Activated CD4-positive, alpha-beta memory T cell treated with anti-CD3 and anti-CD28 coated beads for 36 hours (primary cell): ENCODE measurements at regions of chr6 and their contacts with region 1.

Region 1: DNA sequence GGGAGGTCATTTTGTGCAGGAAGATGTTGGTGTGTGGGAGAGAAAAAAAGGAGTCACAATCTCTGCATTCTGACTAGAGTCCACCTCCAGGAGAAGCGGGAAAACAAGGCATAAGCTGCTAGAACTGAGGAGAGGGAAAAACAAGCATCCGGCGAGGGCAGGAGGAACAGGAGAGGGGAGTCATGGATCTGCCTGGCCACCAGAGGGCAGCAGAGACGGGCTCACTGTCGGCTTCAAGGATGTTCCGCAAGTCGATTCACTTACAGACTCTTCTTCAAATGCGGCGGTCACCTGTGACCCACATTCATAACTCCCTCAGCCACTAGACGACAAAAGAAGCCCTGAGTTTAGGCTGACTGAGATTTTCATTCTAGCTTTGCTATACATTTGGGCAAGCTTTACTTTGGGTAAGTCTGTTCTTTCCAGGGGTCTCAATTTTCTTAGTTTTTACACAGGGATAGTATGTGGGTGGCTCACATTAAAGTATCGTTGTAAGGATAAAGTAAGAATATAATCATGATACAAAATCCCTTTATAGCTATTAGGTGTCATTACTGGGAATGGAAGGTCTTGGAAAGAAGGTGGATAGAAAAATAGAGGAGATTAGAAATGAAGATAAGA is 6.6 kb upstream of the BTNL2 start:
- DNase-seq: peak; percentile 91
- H3K4me3 Mint-ChIP-seq: no peak overlapping the region
- H3K27ac Mint-ChIP-seq: no peak overlapping the region
- H3K4me1 Mint-ChIP-seq: peaks cover 10% of the 10 kb centered on the region
- H3K27me3 Mint-ChIP-seq: peaks cover 42% of the 10 kb centered on the region

Region 2: DNA sequence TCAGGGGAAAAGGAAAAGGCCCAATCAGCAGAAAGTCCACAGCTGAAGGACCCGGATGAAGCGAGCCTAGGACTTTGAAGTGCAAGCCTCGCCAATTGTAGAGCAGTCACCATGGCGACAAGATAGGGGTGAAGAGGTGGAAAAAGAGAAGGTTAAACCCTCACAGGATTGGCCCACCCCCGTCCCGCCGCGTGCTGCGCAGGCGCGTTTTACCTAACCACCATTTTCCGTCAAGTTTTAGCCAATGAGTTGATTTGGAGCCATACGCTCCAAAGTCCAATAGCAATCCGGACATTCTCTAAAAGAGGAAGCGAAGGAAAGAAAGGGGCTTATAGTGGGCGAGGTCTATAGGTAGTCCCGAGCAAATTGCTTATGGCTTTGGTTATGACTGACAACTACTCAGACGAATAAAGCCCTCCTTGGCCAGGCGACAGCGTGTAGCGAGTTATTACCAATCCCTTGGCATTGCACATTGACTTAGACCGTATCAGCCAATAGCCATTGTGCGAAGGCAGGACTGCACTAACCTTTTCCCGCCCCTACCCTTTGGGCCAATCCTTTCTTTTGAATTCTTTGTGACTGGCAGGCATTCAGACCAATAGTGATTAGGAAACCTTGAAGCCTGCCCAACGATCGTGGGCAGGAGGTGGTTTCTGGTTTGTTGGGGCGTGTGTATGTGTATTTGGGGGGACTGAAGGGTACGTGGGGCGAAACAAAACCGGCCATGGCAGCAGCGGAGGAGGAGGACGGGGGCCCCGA is 235.6 kb before region 1 on chr6 and contains the start of gene RNF5:
- CTCF ChIA-PET with region 1: no interaction called
- POLR2A ChIA-PET with region 1: no interaction called
- intact Hi-C with region 1: no loop called
- DNase-seq: peak; percentile 96
- H3K4me3 Mint-ChIP-seq: peak within 1 kb of the TSS; percentile 85
- H3K27ac Mint-ChIP-seq: peak within 1 kb of the TSS; percentile 96
- H3K4me1 Mint-ChIP-seq: peaks cover 65% of the 10 kb centered on the region
- H3K27me3 Mint-ChIP-seq: no peaks in the 10 kb centered on the region
- total RNA-seq, gene RNF5: 60.8 to 63.8 TPM

Region 3: DNA sequence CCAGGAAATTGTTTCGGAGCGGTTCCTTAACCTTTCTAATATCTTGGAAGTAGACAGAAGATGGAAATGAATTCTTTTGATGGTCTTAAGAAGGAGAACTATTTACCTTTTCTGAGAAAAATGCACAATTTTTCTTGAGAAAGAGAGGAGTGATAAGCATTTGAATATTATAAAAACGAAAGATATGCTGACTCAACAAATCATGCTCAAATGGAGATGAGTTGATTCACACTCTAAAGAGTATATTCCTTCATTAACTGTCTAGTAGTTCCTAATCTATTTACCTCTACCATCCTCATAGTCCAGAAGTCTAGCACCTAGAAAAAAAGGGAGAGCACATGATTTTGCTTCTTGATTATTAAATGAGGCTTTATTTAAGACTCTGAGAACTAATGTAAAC is 45.9 kb before region 1 on chr6:
- CTCF ChIA-PET with region 1: no interaction called
- POLR2A ChIA-PET with region 1: no interaction called
- intact Hi-C with region 1: no loop called
- DNase-seq: no peak
- H3K4me3 Mint-ChIP-seq: no peak overlapping the region
- H3K27ac Mint-ChIP-seq: no peak overlapping the region
- H3K4me1 Mint-ChIP-seq: peaks cover 8% of the 10 kb centered on the region
- H3K27me3 Mint-ChIP-seq: peaks cover 36% of the 10 kb centered on the region

Region 4: DNA sequence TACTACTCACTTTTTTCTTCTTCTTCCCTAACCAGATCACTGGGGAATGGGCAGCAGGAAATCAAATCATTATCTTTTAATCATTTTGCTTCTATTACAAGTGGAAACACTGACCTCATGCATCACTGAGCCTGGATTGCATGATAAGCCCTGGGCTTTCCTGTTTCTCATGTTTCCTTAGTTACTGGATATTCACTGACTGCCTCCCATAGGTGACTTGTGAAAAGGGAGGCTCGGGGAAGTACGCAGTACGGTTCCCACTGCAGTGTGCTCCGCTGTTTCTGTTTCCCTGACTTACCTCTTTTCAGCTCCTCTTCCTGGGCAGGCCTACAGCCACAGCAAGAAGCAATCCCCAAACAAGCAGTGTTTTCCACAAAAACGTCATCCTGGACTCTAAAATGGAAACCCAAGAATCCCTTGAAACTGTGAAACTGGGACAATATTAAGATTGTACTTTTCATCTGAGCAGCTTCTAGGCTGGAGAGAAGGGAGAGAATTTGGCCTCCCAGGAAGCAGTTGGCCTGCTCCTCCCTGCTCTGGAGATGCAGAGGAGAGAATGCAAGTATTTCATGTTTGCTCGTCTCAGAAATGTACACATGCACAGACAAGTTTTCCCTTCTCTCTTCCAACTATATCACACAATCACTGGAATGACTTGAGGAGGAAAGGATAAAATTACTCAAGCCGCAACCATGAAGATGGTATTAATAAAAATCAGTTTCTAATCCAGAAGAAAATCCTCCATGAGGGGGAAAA is 19.7 kb before region 1 on chr6:
- CTCF ChIA-PET with region 1: interaction called, 11 read pairs
- POLR2A ChIA-PET with region 1: no interaction called
- intact Hi-C with region 1: no loop called
- DNase-seq: no peak
- H3K4me3 Mint-ChIP-seq: no peak overlapping the region
- H3K27ac Mint-ChIP-seq: no peak overlapping the region
- H3K4me1 Mint-ChIP-seq: peaks cover 6% of the 10 kb centered on the region
- H3K27me3 Mint-ChIP-seq: peaks cover 19% of the 10 kb centered on the region

Region 5: DNA sequence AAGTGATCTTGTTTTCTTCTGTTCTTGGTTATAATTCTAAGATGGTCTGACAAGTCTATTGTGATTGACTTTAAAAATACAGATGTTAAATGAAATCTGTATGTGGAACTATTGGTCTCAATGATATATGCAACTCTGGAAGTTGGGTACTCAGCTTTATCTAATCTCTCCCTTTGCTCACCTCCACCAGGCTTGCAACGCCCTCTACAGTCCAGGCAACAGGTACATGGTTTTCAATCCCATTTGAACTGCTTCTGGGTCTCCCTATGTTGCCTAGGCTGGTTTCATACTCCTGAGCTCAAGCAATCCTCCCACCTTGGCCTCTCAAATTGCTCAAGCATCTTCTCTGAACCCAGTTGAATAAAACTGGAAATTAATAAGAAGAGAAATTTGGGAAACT is 278.5 kb after region 1 on chr6:
- CTCF ChIA-PET with region 1: interaction called, 12 read pairs
- POLR2A ChIA-PET with region 1: no interaction called
- intact Hi-C with region 1: loop called (anchors 2 kb)
- DNase-seq: peak; percentile 65
- H3K4me3 Mint-ChIP-seq: no peak overlapping the region
- H3K27ac Mint-ChIP-seq: no peak overlapping the region
- H3K4me1 Mint-ChIP-seq: peaks cover 6% of the 10 kb centered on the region
- H3K27me3 Mint-ChIP-seq: peaks cover 9% of the 10 kb centered on the region

Region 6: DNA sequence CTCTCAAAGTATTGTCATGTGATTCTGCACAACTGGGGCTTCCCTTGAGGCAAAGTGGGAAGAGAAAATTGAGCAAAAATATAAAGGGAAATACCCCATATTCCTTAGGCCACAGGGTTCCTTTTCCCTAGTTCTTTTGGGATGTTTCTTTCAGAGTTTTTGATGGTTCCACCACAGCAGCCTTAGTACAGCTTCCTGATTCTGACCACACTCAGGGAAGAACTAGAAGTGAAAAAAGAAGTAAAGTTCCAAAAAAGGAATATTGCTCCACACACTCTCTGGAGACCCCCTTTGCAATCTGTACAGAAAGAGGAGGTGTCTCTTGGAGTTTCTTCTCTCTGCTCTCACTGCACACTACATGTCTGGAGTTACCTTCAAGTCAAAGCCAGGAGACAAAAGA is 299.7 kb after region 1 on chr6:
- CTCF ChIA-PET with region 1: interaction called, 10 read pairs
- POLR2A ChIA-PET with region 1: no interaction called
- intact Hi-C with region 1: no loop called
- DNase-seq: no peak
- H3K4me3 Mint-ChIP-seq: no peak overlapping the region
- H3K27ac Mint-ChIP-seq: no peak overlapping the region
- H3K4me1 Mint-ChIP-seq: no peaks in the 10 kb centered on the region
- H3K27me3 Mint-ChIP-seq: peaks cover 4% of the 10 kb centered on the region

Region 7: GRCh38 chr6:32796848-32797776 is 383.6 kb after region 1 on chr6:
- CTCF ChIA-PET with region 1: interaction called, 37 read pairs
- POLR2A ChIA-PET with region 1: no interaction called
- intact Hi-C with region 1: loop called (anchors 1 kb)
- DNase-seq: peak; percentile 84
- H3K4me3 Mint-ChIP-seq: peak overlapping the region; percentile 38
- H3K27ac Mint-ChIP-seq: no peak overlapping the region
- H3K4me1 Mint-ChIP-seq: peaks cover 16% of the 10 kb centered on the region
- H3K27me3 Mint-ChIP-seq: peaks cover 54% of the 10 kb centered on the region